ENCODE measurements at regions of chr2 and their contacts with region 1.

Region 1: GRCh38 chr2:95738301-95738700 is 146.5 kb downstream of the TRIM43 start:
- DNase-seq: no peak
- H3K4me3 ChIP-seq: no peak overlapping the region
- H3K27me3 ChIP-seq: peaks cover 3% of the 10 kb centered on the region
- CTCF ChIP-seq: no peak

Region 2: DNA sequence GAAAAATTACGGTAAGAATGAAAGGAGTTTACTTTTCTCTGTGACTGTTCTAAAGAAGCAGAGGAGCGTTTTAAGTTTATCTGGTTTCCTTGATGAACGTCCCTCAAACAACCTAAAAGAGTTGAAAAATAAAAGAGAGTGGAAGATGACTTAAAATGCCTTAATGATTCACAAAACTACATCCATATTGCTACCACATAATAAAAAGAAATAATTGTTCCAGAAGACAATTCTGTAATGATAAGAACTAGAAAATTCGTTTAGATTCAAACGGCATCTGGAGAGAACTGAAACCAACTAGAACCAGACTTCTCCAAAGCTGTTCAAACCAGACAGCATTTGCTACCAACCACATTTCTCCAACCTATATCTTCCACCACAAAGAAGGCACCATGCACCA is 799.0 kb before region 1 on chr2:
- CTCF ChIA-PET with region 1: no interaction called
- POLR2A ChIA-PET with region 1: no interaction called
- DNase-seq: no peak
- H3K4me3 ChIP-seq: no peak overlapping the region
- H3K27me3 ChIP-seq: no peaks in the 10 kb centered on the region
- CTCF ChIP-seq: no peak

Region 3: DNA sequence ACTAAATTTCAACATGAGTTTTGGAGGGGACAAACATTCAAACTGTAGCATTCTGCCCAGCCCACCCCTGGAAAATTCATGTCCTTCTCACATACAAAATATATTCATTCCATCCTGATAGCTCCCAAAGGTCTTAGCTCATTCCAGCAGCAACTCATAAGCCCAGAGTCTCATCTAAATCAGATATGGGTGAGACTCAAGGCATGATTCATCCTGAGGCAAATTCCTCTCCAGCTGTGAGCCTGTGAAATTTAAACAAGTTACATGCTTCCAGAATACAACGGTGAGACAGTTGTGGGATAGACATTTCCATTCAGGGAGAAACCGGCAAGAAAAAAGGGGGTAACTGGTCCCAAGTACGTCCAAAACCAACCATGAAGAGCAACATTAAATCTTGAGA is 379.3 kb before region 1 on chr2:
- CTCF ChIA-PET with region 1: no interaction called
- POLR2A ChIA-PET with region 1: interaction called, 20 read pairs
- DNase-seq: peak; percentile 33
- H3K4me3 ChIP-seq: no peak overlapping the region
- H3K27me3 ChIP-seq: no peaks in the 10 kb centered on the region
- CTCF ChIP-seq: no peak

Region 4: DNA sequence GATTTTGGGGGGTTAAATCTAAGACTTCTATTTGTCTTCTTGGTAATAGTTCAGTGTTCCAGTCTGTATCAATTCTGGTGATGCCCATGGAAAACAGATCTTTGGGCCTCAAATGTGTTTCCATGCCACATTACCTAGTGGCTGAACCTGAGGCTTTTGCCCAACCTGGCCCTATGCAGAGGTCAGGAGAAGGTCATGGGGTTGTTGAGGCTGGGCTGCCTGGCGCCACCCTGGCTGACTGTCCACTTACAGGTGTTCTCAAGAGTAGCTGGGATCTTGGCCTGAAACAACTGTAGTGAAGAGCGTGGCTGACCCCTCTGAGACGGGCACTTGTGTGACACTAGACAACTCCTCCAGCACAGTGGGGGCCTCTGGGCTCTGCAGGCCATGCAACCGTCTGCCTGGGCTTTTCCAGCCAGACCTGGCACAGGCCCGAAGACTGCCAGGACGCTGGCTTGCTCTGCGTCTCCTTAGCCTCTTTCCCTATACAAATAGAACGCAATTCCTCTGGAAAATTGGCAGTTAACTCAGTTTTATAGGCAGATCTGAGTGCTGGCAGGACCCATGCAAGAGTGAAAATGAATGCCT is 18.7 kb before region 1 on chr2:
- CTCF ChIA-PET with region 1: no interaction called
- POLR2A ChIA-PET with region 1: no interaction called
- DNase-seq: no peak
- H3K4me3 ChIP-seq: no peak overlapping the region
- H3K27me3 ChIP-seq: no peaks in the 10 kb centered on the region
- CTCF ChIP-seq: no peak